A549 (cell line): ENCODE measurements at regions of chr1 and their contacts with region 1.

Region 1: GRCh38 chr1:84506002-84506728 is at the starts of genes GNG5 and SPATA1:
- DNase-seq: peak; percentile 80 to 94
- ATAC-seq: peak; percentile 95 to 96
- H3K4me3 ChIP-seq: peak within 1 kb of the TSS; percentile 79
- H3K27ac ChIP-seq: peak within 1 kb of the TSS; percentile 94 to 99
- H3K4me1 ChIP-seq: peaks cover 22% of the 10 kb centered on the region; the same call in 1 of the 3 replicates
- CTCF ChIP-seq: no peak
- EP300 ChIP-seq: no peak
- POLR2A ChIP-seq: peak; percentile 36
- RAD21 ChIP-seq: no peak
- polyA plus RNA-seq, gene GNG5: 59.3 and 103 TPM in 2 replicates
- polyA plus RNA-seq, gene SPATA1: 0.54 and 1.2 TPM in 2 replicates

Region 2: DNA sequence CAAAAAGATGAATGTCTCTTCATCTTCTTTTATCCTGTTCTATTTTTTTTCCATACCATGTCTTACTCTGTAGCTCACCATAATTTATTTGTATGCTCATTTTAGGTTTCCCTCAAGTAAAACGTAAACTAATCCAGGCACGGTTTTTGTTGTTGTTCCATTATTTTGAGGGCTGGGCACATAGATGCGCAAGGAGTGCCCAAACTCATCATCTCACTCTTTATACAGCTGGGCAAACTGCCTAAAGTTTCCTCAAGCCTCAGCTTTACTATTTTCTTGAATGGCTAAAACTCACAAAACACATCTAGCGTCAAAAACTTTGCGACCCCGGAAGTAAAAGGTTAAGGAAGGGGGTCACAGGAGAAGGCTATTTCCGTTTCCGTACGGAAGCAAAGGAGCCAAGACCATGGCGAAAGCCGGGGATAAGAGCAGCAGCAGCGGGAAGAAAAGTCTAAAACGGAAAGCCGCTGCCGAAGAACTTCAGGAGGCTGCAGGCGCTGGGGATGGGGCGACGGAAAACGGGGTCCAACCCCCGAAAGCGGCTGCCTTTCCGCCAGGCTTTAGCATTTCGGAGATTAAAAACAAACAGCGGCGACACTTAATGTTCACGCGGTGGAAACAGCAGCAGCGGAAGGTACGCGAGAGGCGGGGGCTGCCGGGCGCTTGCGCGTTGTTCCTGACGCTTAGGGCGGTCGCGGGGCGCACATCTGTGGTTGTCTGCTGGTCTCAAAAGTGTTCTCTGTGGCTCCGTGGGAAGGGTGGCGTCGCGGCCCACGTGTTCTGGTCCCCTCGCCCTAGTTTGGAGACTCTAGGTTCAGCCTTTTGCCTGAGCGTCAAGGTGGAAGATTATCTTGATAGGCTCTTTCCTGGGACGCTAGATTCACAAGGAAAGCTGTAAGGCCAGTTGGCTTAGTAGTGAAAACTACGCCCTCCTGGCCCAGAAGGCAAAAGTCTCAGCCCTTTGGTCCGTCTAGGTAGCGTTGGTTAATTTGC is 27.0 kb before region 1 on chr1 and contains the start of gene RPF1:
- CTCF ChIA-PET with region 1: no interaction called
- POLR2A ChIA-PET with region 1: interaction called, 12 read pairs
- DNase-seq: peak; percentile 57 to 80
- ATAC-seq: peak; percentile 99
- H3K4me3 ChIP-seq: peak within 1 kb of the TSS; percentile 86
- H3K27ac ChIP-seq: peak within 1 kb of the TSS; percentile 87 to 95
- H3K4me1 ChIP-seq: peaks cover 12% of the 10 kb centered on the region
- CTCF ChIP-seq: no peak
- EP300 ChIP-seq: no peak
- POLR2A ChIP-seq: peak; percentile 60
- RAD21 ChIP-seq: 0 out of 5 replicates have a peak, but pooled peaks of 1 of the 2 experiments have one; percentile 9
- polyA plus RNA-seq, gene RPF1: 42.4 and 49.8 TPM in 2 replicates

Region 3: GRCh38 chr1:84573967-84574842 is 68.0 kb after region 1 on chr1 and contains the start of gene CTBS:
- CTCF ChIA-PET with region 1: no interaction called
- POLR2A ChIA-PET with region 1: interaction called, 27 read pairs
- DNase-seq: peak; percentile 72 to 77
- ATAC-seq: peak; percentile 96 to 98
- H3K4me3 ChIP-seq: peak within 1 kb of the TSS; percentile 61
- H3K27ac ChIP-seq: peak within 1 kb of the TSS; percentile 79 to 99
- H3K4me1 ChIP-seq: peaks cover 6% of the 10 kb centered on the region; the same call in 1 of the 3 replicates
- CTCF ChIP-seq: no peak
- EP300 ChIP-seq: no peak
- POLR2A ChIP-seq: peak; percentile 61
- RAD21 ChIP-seq: no peak
- polyA plus RNA-seq, gene CTBS: 20.8 and 25.3 TPM in 2 replicates

Region 4: DNA sequence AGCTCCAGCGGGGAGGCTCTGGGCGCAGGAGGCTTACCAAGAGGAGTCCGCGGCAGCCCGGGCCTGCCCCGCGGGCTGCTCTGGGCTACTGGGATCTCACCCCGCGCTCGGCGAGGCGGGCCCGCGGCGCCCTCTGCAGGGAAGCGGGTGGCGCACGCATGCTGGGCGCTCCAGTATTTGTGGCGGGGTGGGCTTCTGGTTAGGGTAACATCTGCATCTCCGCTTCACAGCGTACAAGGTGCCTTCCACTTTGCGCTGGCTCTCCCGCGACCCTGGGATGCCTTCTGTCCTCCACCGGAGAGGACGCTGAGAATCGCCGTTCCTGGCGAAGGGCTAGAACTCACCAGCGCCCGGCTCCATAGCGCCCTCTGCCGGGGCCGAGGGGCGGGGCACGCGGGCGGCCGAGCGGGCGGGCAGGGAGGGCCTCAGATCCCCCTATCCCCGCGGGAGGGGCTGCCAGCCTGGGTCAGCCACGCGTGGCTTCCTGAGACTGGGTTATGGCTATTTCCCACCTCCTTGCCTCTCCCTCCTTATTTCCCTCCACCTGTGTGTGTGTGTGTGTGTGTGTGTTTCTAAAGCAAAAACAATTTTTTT is 114.7 kb after region 1 on chr1:
- CTCF ChIA-PET with region 1: interaction called, 10 read pairs
- POLR2A ChIA-PET with region 1: interaction called, 23 read pairs
- DNase-seq: peak; percentile 44 to 80
- ATAC-seq: peak; percentile 98
- H3K4me3 ChIP-seq: peak overlapping the region; percentile 48
- H3K27ac ChIP-seq: peak overlapping the region; percentile 78 to 97
- H3K4me1 ChIP-seq: peaks cover 12% of the 10 kb centered on the region; the same call in 1 of the 3 replicates
- CTCF ChIP-seq: peak; percentile 98
- EP300 ChIP-seq: no peak
- POLR2A ChIP-seq: peak; percentile 32
- RAD21 ChIP-seq: peak; percentile 50 to 84; a peak in 4 of 5 replicates

Region 5: DNA sequence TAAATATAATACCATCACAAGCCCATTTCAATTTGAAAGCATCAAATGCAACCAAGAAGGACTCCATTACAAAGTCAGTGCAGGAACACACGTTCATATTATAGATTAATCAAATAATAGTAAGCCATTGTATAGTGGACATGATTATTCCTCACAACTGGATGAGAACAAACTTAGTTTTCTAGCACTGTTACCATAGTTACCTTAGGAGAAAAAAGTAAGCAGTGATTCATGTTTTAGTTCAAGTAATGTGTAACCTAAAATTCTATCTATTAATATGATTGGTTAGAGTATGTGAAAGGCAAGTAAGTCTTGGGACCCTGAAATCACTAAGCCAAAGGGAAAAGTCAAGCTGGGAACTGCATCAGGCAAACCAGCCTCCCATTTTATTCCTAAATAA is 168.9 kb after region 1 on chr1:
- CTCF ChIA-PET with region 1: no interaction called
- POLR2A ChIA-PET with region 1: no interaction called
- DNase-seq: no peak
- ATAC-seq: no peak
- H3K4me3 ChIP-seq: no peak overlapping the region
- H3K27ac ChIP-seq: no peak overlapping the region
- H3K4me1 ChIP-seq: no peaks in the 10 kb centered on the region
- CTCF ChIP-seq: no peak
- EP300 ChIP-seq: no peak
- POLR2A ChIP-seq: no peak
- RAD21 ChIP-seq: no peak

Region 6: DNA sequence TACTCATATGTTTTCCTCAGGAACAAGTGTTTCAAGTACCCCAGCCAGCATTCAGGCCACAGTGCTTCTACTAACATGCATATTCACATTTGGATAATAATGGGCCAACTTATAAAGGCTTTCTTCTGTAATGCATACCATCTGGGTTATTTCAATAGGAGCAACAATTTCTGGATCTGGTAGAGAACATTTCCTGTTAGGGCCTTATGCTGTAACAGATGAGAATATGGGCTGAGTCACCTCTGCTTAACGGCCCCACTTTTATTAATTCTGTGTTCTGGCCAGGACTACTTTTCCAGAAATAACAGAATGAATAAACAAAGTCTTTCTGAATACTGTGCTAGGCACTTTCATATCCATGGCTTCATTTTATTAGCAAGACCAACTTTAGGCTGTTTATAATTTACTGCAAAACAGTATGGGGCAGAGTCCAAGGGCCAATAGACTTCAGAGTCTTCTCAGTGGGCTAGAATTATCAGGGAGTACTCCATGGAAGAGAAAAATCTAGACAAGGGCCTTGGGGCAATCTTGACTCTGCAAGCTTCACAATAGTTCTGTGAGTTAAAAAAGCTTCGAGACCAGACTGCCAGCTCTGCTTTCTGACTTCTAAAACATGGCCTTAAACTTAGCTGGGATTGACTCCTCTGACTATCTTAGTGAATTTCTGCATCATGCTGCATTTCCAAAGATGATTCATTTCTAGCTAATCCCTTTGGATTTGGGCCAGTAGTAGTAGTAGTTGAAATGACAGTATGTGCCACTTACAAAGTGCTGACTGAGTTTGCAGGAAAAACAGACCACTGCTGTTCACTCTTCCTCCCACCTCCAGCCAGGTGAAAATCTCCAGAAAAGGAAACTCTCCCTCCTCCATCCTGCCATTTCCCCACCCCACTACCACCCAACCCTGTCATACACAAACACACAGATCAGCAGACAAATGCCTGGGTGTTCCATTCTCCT is 192.3 kb after region 1 on chr1:
- CTCF ChIA-PET with region 1: no interaction called
- POLR2A ChIA-PET with region 1: no interaction called
- DNase-seq: peak; percentile 16 to 19
- ATAC-seq: peak; percentile 74 to 81; a peak in 5 of 6 replicates
- H3K4me3 ChIP-seq: no peak overlapping the region
- H3K27ac ChIP-seq: peak overlapping the region; percentile 14 to 60; a peak in 2 of 6 replicates
- H3K4me1 ChIP-seq: peaks cover 15% of the 10 kb centered on the region
- CTCF ChIP-seq: no peak
- EP300 ChIP-seq: no peak
- POLR2A ChIP-seq: no peak
- RAD21 ChIP-seq: no peak